Right ventricle myocardium inferior (tissue), 1 donor: ENCODE measurements at regions of chr4 and their contacts with region 1.

Region 1: GRCh38 chr4:39365830-39366771 is at the start of gene RFC1:
- DNase-seq: peak; percentile 96
- ATAC-seq: peak; percentile 94
- total RNA-seq, gene RFC1: 23.9 TPM

Region 2: DNA sequence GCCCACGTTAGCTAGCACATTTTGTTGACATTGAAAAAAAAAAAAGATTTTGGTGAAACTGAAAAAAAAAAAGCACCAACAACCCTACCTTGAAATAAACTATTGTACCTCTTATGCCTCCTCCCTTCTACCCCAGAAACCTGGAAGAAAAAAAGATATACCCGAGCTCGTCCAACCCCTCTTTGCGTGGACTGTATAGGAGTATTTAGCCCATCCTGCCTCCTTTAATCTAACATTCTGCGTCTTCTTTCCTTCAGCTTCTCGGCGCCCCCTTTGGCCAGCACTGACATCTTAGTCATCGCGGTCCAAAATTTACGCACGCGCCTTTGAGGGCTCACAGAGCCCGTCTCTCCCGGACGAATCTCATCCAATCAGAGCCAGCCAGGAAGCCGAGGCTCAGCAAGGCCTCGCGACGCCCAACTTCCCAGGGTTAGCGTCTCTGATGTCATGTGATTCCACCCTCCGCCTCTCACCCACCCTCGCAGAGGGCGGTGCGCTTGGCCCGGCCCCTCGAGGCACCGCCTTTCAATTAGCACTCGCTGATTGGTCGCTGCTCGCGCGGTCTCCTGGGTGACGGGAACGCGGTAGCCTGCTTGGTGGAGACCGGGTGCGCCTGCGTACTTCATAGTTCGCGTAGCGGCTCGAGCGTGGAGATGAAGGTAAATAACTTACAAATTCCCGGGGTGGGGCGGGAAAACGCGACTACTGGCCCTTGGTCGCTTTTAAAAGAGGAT is 184.0 kb before region 1 on chr4 and contains the start of gene WDR19:
- intact Hi-C with region 1: loop called (anchors 2 kb)
- DNase-seq: peak; percentile 100
- ATAC-seq: peak; percentile 100
- total RNA-seq, gene WDR19: 6.5 TPM

Region 3: GRCh38 chr4:39480902-39481695 is 115.0 kb after region 1 on chr4:
- intact Hi-C with region 1: no loop called
- DNase-seq: no peak
- ATAC-seq: no peak